PC-9 (cell line): ENCODE measurements at regions of chr20 and their contacts with region 1.

Region 1: GRCh38 chr20:9616833-9617489 is 102.6 kb downstream of the LAMP5 start:
- DNase-seq: peak; percentile 31 to 42
- H3K4me3 ChIP-seq: no peak overlapping the region; the same call in 1 of the 2 replicates
- H3K27ac ChIP-seq: no peak overlapping the region
- H3K4me1 ChIP-seq: no peaks in the 10 kb centered on the region
- H3K27me3 ChIP-seq: no peaks in the 10 kb centered on the region; the same call in 1 of the 2 replicates
- CTCF ChIP-seq: peak; percentile 90

Region 2: DNA sequence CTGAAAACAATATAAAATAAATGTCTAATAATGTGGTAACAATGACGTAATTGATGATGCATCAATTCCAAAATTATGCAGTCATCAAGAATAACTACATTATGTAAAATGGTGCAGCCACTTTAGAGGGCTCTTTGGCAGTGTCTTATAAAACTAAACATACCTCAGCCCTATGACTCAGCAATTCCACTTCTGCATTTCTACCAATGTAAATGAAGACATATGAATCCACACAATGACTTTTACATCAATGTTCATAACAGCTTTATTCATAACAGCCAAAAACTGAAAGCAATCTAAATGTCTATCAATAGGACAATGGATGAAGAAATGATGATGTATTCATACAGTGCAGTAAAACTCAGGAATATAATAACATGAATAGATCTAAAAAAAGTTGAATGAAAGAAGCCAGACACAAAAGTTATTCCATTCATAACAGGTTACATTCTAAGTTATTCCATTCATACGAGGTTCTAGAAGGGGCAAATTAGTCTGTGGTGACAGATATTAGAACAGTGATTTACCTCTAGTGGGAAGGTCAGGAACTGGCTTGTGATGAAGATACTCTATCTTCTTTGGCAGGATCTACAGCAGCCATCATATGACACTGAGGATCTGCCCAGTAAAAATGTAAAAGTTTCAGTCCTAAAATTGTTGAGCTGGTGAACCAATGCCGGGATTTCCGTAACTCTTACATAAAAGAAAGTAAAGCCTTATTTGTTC is 1088.8 kb before region 1 on chr20:
- CTCF ChIA-PET with region 1: no interaction called
- POLR2A ChIA-PET with region 1: no interaction called
- intact Hi-C with region 1: no loop called
- DNase-seq: no peak
- H3K4me3 ChIP-seq: no peak overlapping the region
- H3K27ac ChIP-seq: no peak overlapping the region
- H3K4me1 ChIP-seq: no peaks in the 10 kb centered on the region
- H3K27me3 ChIP-seq: no peaks in the 10 kb centered on the region
- CTCF ChIP-seq: no peak

Region 3: DNA sequence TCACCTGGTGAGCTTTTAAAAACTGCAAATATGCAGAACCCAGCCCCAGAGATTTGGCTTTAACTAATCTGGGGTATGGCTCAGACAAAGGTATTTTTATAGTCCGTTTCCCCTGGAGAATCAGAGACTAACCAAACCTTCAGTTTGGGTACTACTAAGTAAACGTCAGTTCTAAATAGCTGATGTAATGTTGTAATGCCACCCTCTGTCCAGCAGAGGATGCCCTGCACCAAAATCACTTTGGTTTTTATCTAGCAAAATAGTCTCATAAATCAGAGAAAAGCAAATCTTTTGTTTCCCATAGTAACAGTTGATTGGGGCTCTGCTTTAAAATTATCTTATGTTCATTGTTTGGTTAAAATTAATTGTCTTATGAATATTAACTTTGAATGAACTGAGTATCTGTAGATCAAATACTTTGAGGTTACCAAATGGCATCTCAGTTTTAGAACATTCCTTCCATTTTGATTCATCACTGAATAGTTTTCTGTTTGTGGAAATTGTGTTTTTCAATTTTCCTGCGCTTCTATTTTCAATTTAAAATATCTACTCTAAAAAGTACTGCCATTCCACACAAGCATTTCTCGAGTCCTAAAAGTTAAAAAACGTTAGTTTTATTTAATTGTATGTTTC is 826.4 kb before region 1 on chr20:
- CTCF ChIA-PET with region 1: no interaction called
- POLR2A ChIA-PET with region 1: no interaction called
- intact Hi-C with region 1: loop called (anchors 5 kb)
- DNase-seq: peak in 1 of 2 experiments; percentile 12
- H3K4me3 ChIP-seq: no peak overlapping the region
- H3K27ac ChIP-seq: no peak overlapping the region
- H3K4me1 ChIP-seq: no peaks in the 10 kb centered on the region
- H3K27me3 ChIP-seq: peaks cover 3% of the 10 kb centered on the region; the same call in 1 of the 2 replicates
- CTCF ChIP-seq: peak; percentile 96

Region 4: GRCh38 chr20:9912858-9913434 is 296.0 kb after region 1 on chr20:
- CTCF ChIA-PET with region 1: interaction called, 3 read pairs
- POLR2A ChIA-PET with region 1: no interaction called
- intact Hi-C with region 1: loop called (anchors 1 kb)
- DNase-seq: peak in 1 of 2 experiments; percentile 16
- H3K4me3 ChIP-seq: no peak overlapping the region
- H3K27ac ChIP-seq: no peak overlapping the region
- H3K4me1 ChIP-seq: no peaks in the 10 kb centered on the region
- H3K27me3 ChIP-seq: peaks cover 6% of the 10 kb centered on the region; the same call in 1 of the 2 replicates
- CTCF ChIP-seq: peak; percentile 88

Region 5: GRCh38 chr20:10090588-10091166 is 473.7 kb after region 1 on chr20:
- CTCF ChIA-PET with region 1: no interaction called
- POLR2A ChIA-PET with region 1: no interaction called
- intact Hi-C with region 1: loop called (anchors 5 kb)
- DNase-seq: peak; percentile 21 to 47
- H3K4me3 ChIP-seq: no peak overlapping the region
- H3K27ac ChIP-seq: no peak overlapping the region
- H3K4me1 ChIP-seq: peaks cover 27% of the 10 kb centered on the region
- H3K27me3 ChIP-seq: no peaks in the 10 kb centered on the region
- CTCF ChIP-seq: peak; percentile 83

Region 6: DNA sequence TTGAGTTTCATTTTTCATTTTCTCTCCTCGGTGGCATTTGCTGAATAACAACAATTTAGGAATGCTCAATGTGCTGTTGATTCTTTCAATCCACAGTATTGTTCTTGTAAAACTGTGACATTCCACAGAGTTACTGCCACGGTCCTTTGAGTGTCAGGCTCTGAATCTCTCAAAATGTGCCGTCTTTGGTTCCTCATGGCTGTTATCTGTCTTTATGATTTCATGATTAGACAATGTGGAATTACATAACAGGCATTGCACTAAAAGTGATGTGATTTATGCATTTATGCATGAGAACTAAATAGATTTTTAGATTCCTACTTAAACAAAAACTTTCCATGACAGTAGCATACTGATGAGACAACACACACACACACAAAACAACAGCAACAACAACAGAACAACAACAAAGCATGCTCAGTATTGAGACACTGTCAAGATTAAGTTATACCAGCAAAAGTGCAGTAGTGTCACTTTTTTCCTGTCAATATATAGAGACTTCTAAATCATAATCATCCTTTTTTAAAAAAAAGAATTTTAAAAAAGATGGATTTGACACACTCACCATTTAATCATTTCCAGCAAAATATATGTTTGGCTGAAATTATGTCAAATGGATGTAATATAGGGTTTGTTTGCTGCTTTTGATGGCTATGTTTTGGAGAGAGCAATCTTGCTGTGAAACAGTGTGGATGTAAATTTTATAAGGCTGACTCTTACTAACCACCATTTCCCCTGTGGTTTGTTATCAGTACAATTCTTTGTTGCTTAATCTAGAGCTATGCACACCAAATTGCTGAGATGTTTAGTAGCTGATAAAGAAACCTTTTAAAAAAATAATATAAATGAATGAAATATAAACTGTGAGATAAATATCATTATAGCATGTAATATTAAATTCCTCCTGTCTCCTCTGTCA is 689.7 kb after region 1 on chr20:
- CTCF ChIA-PET with region 1: interaction called, 10 read pairs
- POLR2A ChIA-PET with region 1: no interaction called
- intact Hi-C with region 1: no loop called
- DNase-seq: peak in 1 of 2 experiments; percentile 78
- H3K4me3 ChIP-seq: no peak overlapping the region
- H3K27ac ChIP-seq: peak overlapping the region; percentile 43
- H3K4me1 ChIP-seq: peaks cover 59% of the 10 kb centered on the region
- H3K27me3 ChIP-seq: no peaks in the 10 kb centered on the region
- CTCF ChIP-seq: no peak

Region 7: GRCh38 chr20:10427060-10427692 is 810.2 kb after region 1 on chr20:
- CTCF ChIA-PET with region 1: no interaction called
- POLR2A ChIA-PET with region 1: no interaction called
- intact Hi-C with region 1: loop called (anchors 1 kb)
- DNase-seq: peak; percentile 33 to 56
- H3K4me3 ChIP-seq: no peak overlapping the region
- H3K27ac ChIP-seq: no peak overlapping the region
- H3K4me1 ChIP-seq: no peaks in the 10 kb centered on the region
- H3K27me3 ChIP-seq: no peaks in the 10 kb centered on the region
- CTCF ChIP-seq: peak; percentile 85

Region 8: GRCh38 chr20:11287126-11287525 is 1670.2 kb after region 1 on chr20:
- CTCF ChIA-PET with region 1: interaction called, 10 read pairs
- POLR2A ChIA-PET with region 1: no interaction called
- intact Hi-C with region 1: loop called (anchors 5 kb)
- DNase-seq: no peak
- H3K4me3 ChIP-seq: no peak overlapping the region
- H3K27ac ChIP-seq: no peak overlapping the region
- H3K4me1 ChIP-seq: no peaks in the 10 kb centered on the region
- H3K27me3 ChIP-seq: no peaks in the 10 kb centered on the region
- CTCF ChIP-seq: no peak